CD8-positive, alpha-beta memory T cell (primary cell): ENCODE measurements at regions of chr19 and their contacts with region 1.

Region 1: DNA sequence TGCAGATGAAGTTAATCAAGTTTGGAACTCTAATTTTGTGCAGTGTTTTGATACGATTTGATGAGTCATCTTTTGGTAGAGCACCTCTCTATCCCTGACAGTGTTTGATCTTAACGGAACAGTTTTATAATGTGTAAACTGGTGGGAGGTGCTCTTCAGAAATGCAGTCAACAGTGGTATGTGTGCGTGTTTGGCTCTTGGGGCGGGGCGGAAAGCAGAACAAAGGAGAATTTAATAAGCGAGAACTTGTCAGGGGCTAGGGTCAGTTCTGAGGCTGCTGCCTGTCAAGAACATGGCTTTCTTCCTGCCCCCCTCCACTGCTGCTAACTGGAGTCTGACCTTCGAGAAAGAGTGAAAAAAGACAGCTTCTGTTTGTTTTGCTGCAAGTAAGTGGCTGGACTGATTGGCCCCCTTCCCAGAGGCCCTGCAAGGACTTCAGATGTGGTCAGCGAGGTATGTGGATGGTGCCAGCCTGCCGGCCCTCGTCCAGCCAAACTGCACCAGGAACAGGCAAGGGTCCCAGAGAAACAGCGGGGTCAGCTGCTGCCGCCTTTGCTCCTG is 40.8 kb downstream of the BBC3 start:
- DNase-seq: peak in 3 of 5 donors; percentile 39 to 67 (median 67)
- H3K4me3 ChIP-seq: no peak overlapping the region
- H3K4me3 Mint-ChIP-seq: peak overlapping the region; percentile 2 to 55 (median 33)
- H3K27ac ChIP-seq: no peak overlapping the region
- H3K27ac Mint-ChIP-seq: peak overlapping the region; percentile 48 to 91 (median 70)
- H3K4me1 ChIP-seq: peaks cover 72% of the 10 kb centered on the region
- H3K4me1 Mint-ChIP-seq: peaks cover 41 to 69% (median 55%) of the 10 kb centered on the region in 3 donors
- H3K27me3 ChIP-seq: no peaks in the 10 kb centered on the region
- H3K27me3 Mint-ChIP-seq: no peaks in the 10 kb centered on the region

Region 2: DNA sequence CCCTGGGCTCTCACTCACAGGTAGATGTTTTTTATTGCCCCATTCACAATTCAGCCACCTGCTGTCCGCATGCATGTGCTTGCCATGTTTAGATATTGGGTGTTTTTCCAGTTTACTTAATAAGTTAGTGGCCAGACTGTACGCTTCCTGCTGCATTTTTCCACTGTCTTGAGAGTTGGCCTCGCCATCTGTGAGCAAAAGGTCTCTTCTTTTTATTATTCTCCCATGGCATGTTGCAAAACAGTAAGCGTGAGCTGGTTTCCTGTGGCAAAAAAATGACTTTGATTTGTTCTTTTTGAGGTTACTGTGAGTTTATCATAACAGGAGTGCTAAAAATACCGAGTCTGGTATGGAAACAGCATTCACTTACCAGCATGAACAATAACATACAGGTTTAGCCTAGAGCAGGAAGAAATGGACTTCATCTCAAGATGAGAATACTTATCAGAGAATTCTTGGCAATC is 13.6 kb before region 1 on chr19:
- CTCF ChIA-PET with region 1: interaction called, 29 read pairs
- POLR2A ChIA-PET with region 1: interaction called, 7 read pairs
- DNase-seq: peak in 3 of 5 donors; percentile 54 to 79 (median 63)
- H3K4me3 ChIP-seq: peak overlapping the region; percentile 17
- H3K4me3 Mint-ChIP-seq: peak overlapping the region; percentile 10 to 86 (median 82)
- H3K27ac ChIP-seq: no peak overlapping the region
- H3K27ac Mint-ChIP-seq: peak overlapping the region; percentile 68 to 97 (median 92)
- H3K4me1 ChIP-seq: peaks cover 58% of the 10 kb centered on the region
- H3K4me1 Mint-ChIP-seq: peaks cover 44 to 71% (median 66%) of the 10 kb centered on the region in 3 donors
- H3K27me3 ChIP-seq: no peaks in the 10 kb centered on the region
- H3K27me3 Mint-ChIP-seq: no peaks in the 10 kb centered on the region